Transverse colon (tissue), 4 donors: ENCODE measurements at regions of chr14 and their contacts with region 1.

Region 1: GRCh38 chr14:74109369-74109768 is 24.6 kb downstream of the LIN52 start:
- DNase-seq: no peak
- H3K4me3 ChIP-seq: no peak overlapping the region
- H3K27ac ChIP-seq: no peak overlapping the region
- H3K4me1 ChIP-seq: no peaks in the 10 kb centered on the region
- H3K27me3 ChIP-seq: no peaks in the 10 kb centered on the region
- CTCF ChIP-seq: no peak
- EP300 ChIP-seq: no peak
- POLR2A ChIP-seq: no peak

Region 2: GRCh38 chr14:74144789-74145188 is 35.4 kb after region 1 on chr14:
- in situ Hi-C with region 1: no loop called
- intact Hi-C with region 1: no loop called
- DNase-seq: no peak
- H3K4me3 ChIP-seq: no peak overlapping the region
- H3K27ac ChIP-seq: no peak overlapping the region
- H3K4me1 ChIP-seq: peaks cover 6 to 31% (median 21%) of the 10 kb centered on the region in 4 donors
- H3K27me3 ChIP-seq: no peaks in the 10 kb centered on the region
- CTCF ChIP-seq: no peak
- EP300 ChIP-seq: no peak
- POLR2A ChIP-seq: no peak

Region 3: GRCh38 chr14:74249433-74250375 is 140.3 kb after region 1 on chr14:
- in situ Hi-C with region 1: loop called in 3 of 4 experiments (anchors 5 to 10 kb)
- intact Hi-C with region 1: loop called (anchors 5 kb)
- DNase-seq: no peak
- H3K4me3 ChIP-seq: no peak overlapping the region
- H3K27ac ChIP-seq: no peak overlapping the region
- H3K4me1 ChIP-seq: peaks cover 0 to 7% (median 2%) of the 10 kb centered on the region in 4 donors
- H3K27me3 ChIP-seq: peaks cover 59% of the 10 kb centered on the region
- CTCF ChIP-seq: no peak
- EP300 ChIP-seq: no peak
- POLR2A ChIP-seq: no peak

Region 4: DNA sequence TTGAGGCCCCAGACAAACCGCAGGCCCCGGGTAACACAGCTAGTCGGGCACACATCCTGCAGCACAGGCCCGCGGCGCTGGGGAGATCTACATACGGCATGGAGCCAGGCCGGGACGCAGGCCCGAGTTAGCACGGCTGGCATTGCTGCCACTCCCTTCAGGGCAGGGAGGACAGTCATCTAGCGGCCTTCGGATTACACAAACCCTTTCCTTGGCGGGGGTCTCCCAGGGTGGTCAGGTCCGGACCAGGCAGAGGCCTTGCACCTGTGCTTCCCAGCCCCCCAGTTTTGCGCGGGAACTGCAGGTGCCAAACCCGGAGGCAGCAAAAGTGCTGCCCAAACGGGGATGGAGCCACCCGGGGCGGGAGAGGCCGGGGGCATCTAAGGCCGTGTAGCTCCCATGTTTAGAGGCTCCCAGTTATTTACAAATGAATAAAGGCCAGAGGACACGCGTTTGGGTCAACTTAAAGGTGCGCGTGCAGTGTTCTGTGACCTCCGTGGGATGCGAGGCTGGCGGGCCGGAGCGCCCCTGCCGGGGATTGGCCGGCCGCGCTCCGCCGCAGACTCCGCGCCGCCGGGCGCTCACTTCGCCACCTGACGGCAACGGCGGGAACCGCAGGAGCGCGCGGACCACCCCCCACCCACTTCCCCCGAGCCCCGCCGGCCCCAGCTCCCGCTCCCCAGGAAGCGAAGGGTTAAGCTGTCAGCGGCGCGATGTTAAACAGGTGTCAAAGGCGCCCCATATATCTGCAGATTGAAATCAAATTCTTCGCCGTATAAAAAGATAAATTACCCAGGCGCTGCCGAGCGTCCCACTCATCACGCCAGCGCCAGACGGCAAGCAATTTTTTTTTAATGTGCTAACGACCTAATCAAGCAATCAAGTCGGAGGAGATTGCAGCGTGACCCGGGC is 148.0 kb after region 1 on chr14:
- in situ Hi-C with region 1: loop called in 3 of 4 experiments (anchors 5 to 10 kb)
- intact Hi-C with region 1: no loop called
- DNase-seq: peak; percentile 43
- H3K4me3 ChIP-seq: peak overlapping the region; percentile 31 to 64 (median 44)
- H3K27ac ChIP-seq: no peak overlapping the region
- H3K4me1 ChIP-seq: peaks cover 5 to 15% (median 14%) of the 10 kb centered on the region in 4 donors
- H3K27me3 ChIP-seq: peaks cover 33% of the 10 kb centered on the region
- CTCF ChIP-seq: peak; percentile 51 to 99 (median 95)
- EP300 ChIP-seq: no peak
- POLR2A ChIP-seq: no peak